ENCODE measurements at regions of chr7 and their contacts with region 1.

Region 1: GRCh38 chr7:87059525-87060287 is at the start of gene ELAPOR2:
- DNase-seq: peak; percentile 86
- total RNA-seq, gene ELAPOR2: 8.9 TPM

Region 2: DNA sequence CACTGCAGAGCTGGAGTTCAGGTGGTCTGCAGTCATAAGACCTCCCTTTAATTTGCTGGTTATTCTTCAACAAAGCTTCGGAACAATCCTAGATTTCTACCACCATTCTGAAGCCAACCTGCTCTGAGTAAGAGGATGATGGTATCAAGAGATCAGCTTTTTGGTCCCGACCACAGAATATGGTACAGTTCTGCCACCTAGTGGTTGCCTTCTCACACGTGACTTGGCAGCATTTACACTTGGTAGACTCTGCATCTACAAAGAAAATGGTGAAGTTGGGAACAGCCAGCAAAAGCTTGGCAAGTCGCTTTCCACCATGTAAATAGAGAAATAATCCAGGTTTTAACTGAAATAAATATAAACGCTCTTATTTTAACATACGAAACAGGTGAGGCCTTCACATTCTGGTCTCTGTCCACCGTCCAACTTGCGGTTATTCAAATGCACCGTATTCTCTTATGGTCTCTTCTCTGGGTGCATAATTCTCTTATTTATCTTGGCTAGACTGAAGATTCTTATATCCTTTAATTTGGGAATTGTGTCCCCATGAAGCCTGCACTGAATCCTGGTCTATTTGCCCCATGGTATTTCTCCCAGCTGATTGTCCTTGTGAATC is 589.9 kb before region 1 on chr7:
- intact Hi-C with region 1: no loop called
- DNase-seq: no peak

Region 3: DNA sequence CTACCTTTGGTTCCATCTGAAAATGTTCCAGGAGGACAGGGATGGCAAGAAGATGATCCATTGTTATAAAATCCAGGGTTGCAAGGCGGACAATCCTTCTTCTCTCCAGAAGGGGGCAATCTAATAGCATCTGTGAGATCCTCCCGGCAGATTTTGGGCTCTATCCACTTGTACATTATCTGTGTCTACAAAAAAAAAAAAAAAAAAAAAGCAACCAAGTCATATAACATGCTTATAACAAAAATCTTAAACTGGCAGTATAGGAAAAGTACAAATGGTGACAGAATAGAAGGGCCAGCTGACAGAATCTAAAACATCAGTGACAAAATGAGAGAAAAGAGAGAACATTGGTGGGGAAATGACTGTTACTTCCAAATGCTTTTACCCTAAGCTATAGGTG is 133.0 kb before region 1 on chr7:
- intact Hi-C with region 1: no loop called
- DNase-seq: no peak

Region 4: GRCh38 chr7:86939197-86939814 is 120.4 kb before region 1 on chr7:
- intact Hi-C with region 1: loop called (anchors 5 kb)
- DNase-seq: no peak